K562 (cell line): ENCODE measurements at regions of chr3 and their contacts with region 1.

Region 1: GRCh38 chr3:176939022-176939817 is 258.1 kb downstream of the TBL1XR1 start:
- DNase-seq: peak; percentile 57 to 70 (median 60)
- ATAC-seq: peak; percentile 96
- H3K4me3 ChIP-seq: no peak overlapping the region
- H3K27ac ChIP-seq: no peak overlapping the region
- H3K4me1 ChIP-seq: no peaks in the 10 kb centered on the region
- H3K27me3 ChIP-seq: no peaks in the 10 kb centered on the region
- CTCF ChIP-seq: peak; percentile 63 to 77 (median 74)
- EP300 ChIP-seq: no peak
- POLR2A ChIP-seq: no peak
- RAD21 ChIP-seq: peak; percentile 78 to 89

Region 2: DNA sequence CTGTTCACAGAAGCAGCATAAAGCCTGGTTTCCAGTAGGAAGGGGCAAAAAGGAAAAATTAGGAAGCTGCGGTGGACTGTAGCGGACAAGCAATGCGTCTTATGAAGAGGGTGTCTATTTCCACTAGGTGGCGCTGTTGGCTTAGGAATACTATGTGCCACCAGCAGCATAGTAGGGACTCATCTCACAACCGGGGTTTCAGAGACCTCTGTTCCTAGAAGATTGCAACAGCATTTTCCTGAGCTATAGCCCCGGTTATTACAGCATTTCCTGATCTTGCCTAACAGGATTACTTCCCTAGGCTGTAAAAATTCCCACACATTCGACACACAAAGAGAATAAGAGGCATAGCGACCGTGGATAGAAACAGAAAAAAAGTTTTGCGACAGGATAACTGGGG is 424.9 kb before region 1 on chr3:
- CTCF ChIA-PET with region 1: no interaction called
- POLR2A ChIA-PET with region 1: no interaction called
- in situ Hi-C with region 1: no loop called
- intact Hi-C with region 1: loop called (anchors 1 kb)
- DNase-seq: peak; percentile 79 to 87 (median 80)
- ATAC-seq: peak; percentile 99
- H3K4me3 ChIP-seq: no peak overlapping the region
- H3K27ac ChIP-seq: no peak overlapping the region
- H3K4me1 ChIP-seq: no peaks in the 10 kb centered on the region
- H3K27me3 ChIP-seq: no peaks in the 10 kb centered on the region
- CTCF ChIP-seq: peak; percentile 72 to 85 (median 72)
- EP300 ChIP-seq: no peak
- POLR2A ChIP-seq: no peak
- RAD21 ChIP-seq: peak; percentile 94 to 95

Region 3: DNA sequence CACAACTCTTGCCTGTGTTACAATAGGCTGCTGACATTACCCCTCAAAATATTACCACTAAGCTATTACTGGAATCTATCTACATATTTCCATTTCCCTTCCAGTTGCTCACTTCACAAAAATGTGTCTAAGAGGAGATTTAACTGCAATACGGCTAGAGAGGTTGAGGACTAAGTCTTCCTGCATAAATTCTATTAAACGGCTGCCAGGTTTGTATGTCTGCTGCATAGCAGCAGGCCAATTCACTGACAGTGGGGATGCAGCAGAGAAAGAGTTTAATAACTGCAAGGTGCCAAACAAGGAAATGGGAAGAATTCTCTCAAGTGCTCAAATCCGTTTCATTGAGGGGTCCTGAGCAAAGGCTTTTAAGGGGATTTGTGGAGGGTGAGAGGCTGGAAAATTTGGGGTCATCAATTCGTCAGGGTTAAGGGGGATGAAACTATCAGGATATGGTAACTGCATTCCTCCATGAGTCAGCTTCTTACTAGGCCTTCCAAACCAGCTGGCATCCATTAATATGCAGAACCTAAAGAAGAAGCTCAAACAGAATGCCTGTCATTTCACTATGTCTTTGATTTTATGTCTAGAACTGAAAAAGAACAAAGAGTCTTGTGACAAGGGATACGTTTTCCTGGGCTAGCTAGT is 417.6 kb before region 1 on chr3:
- CTCF ChIA-PET with region 1: no interaction called
- POLR2A ChIA-PET with region 1: no interaction called
- in situ Hi-C with region 1: loop called (anchors 10 kb)
- intact Hi-C with region 1: no loop called
- DNase-seq: no peak
- ATAC-seq: no peak
- H3K4me3 ChIP-seq: no peak overlapping the region
- H3K27ac ChIP-seq: no peak overlapping the region
- H3K4me1 ChIP-seq: no peaks in the 10 kb centered on the region; a peak in 1 of 5 replicates
- H3K27me3 ChIP-seq: no peaks in the 10 kb centered on the region
- CTCF ChIP-seq: no peak
- EP300 ChIP-seq: no peak
- POLR2A ChIP-seq: no peak
- RAD21 ChIP-seq: no peak

Region 4: GRCh38 chr3:176663837-176664831 is 275.1 kb before region 1 on chr3:
- CTCF ChIA-PET with region 1: no interaction called
- POLR2A ChIA-PET with region 1: no interaction called
- in situ Hi-C with region 1: no loop called
- intact Hi-C with region 1: no loop called
- DNase-seq: peak in 2 of 4 experiments; percentile 18 to 67
- ATAC-seq: peak; percentile 77
- H3K4me3 ChIP-seq: no peak overlapping the region
- H3K27ac ChIP-seq: no peak overlapping the region
- H3K4me1 ChIP-seq: peaks cover 0 to 9% of the 10 kb centered on the region in 2 experiments; a peak in 2 of 5 replicates
- H3K27me3 ChIP-seq: no peaks in the 10 kb centered on the region
- CTCF ChIP-seq: peak; percentile 30 to 66 (median 58); a peak in 5 of 6 replicates
- EP300 ChIP-seq: no peak
- POLR2A ChIP-seq: no peak
- RAD21 ChIP-seq: peak; percentile 80 to 86

Region 5: GRCh38 chr3:176814285-176814684 is 124.9 kb before region 1 on chr3:
- CTCF ChIA-PET with region 1: no interaction called
- POLR2A ChIA-PET with region 1: no interaction called
- in situ Hi-C with region 1: no loop called
- intact Hi-C with region 1: loop called (anchors 5 kb)
- DNase-seq: peak; percentile 9 to 74 (median 34)
- ATAC-seq: peak; percentile 100
- H3K4me3 ChIP-seq: no peak overlapping the region
- H3K27ac ChIP-seq: no peak overlapping the region
- H3K4me1 ChIP-seq: no peaks in the 10 kb centered on the region
- H3K27me3 ChIP-seq: no peaks in the 10 kb centered on the region
- CTCF ChIP-seq: peak; percentile 68 to 76 (median 71)
- EP300 ChIP-seq: no peak
- POLR2A ChIP-seq: no peak
- RAD21 ChIP-seq: peak; percentile 40 to 61

Region 6: DNA sequence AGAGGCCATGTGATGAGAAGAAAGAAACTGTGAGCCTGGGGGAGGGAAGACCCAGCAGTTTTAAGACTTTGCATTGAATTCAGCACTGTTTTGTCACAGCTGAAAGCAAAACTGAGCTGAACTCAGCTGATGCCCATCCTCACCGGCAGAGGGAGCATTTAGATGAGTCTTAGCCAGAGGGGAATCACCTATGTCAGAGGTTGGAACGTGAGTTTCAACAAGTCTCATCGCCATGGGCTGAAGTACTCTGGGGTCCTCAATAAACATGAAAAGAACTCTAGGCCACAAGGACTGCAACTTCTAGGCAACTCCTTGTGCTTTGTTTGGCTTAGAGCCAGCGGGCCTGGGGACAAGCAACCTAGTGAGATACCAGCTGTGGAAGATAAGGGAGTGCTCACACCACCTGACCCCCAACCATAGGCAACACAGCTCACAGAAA is 66.4 kb before region 1 on chr3:
- CTCF ChIA-PET with region 1: no interaction called
- POLR2A ChIA-PET with region 1: no interaction called
- in situ Hi-C with region 1: no loop called
- intact Hi-C with region 1: loop called (anchors 2 kb)
- DNase-seq: peak; percentile 21 to 61 (median 30)
- ATAC-seq: peak; percentile 95
- H3K4me3 ChIP-seq: no peak overlapping the region
- H3K27ac ChIP-seq: no peak overlapping the region
- H3K4me1 ChIP-seq: peaks cover 3 to 5% of the 10 kb centered on the region in 2 experiments; a peak in 3 of 5 replicates
- H3K27me3 ChIP-seq: no peaks in the 10 kb centered on the region
- CTCF ChIP-seq: peak; percentile 65 to 72 (median 66)
- EP300 ChIP-seq: no peak
- POLR2A ChIP-seq: no peak
- RAD21 ChIP-seq: peak; percentile 29 to 75

Region 7: DNA sequence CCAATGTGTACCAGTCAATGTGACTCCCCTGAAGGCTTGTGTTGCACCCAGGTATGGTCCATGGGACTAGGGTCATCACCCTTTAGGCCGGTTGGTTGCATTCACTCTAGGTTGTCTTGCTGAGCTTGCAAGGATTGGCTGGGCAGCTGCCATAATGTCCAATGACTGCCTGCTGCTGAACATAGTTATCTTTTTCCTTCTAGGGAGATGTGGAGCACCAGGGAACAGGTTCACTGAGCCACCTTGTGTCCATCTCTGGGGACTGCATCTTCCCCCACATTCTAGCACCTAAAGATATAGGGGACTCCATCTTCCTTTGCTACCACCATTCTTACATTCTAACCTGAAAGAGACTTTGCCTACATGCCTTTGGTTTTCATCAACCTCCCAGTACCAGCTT is 838.5 kb after region 1 on chr3:
- CTCF ChIA-PET with region 1: no interaction called
- POLR2A ChIA-PET with region 1: no interaction called
- in situ Hi-C with region 1: loop called (anchors 10 kb)
- intact Hi-C with region 1: no loop called
- DNase-seq: peak; percentile 50 to 75 (median 56)
- ATAC-seq: peak; percentile 98
- H3K4me3 ChIP-seq: no peak overlapping the region
- H3K27ac ChIP-seq: no peak overlapping the region
- H3K4me1 ChIP-seq: no peaks in the 10 kb centered on the region; a peak in 1 of 5 replicates
- H3K27me3 ChIP-seq: no peaks in the 10 kb centered on the region
- CTCF ChIP-seq: peak; percentile 68 to 78 (median 76)
- EP300 ChIP-seq: no peak
- POLR2A ChIP-seq: no peak
- RAD21 ChIP-seq: peak; percentile 87 to 93

Region 8: DNA sequence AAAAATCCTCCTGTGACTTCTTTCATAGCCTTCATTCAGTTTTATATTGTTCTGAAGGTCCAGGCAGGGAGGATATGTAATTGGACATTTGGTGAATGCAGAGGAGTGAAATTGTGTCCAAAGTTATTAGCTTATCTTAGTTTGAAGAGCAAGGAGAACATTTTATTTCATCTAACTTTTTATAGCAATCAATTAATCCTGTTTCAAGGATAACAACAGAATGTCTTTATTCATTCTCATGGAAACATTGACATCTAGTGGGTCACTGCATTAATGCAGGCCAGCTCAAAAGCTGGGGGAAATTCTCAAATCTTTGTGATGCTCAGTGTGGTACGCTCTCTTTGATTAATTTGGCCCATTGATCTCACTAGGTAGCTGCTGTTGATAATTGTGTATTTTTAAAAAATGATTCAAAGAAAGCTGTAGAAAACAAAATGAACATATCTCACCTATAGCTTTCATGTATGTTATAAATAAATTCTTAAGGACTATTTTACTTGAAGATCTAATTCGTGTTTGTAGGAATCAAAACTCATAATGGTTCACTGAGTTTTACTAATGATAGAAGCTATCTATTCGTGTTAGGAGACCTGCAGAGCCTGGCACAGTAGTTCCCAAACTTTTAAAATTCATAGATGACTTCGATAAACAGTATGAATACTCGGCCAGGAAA is 1446.2 kb after region 1 on chr3:
- CTCF ChIA-PET with region 1: no interaction called
- POLR2A ChIA-PET with region 1: no interaction called
- in situ Hi-C with region 1: no loop called
- intact Hi-C with region 1: loop called (anchors 10 kb)
- DNase-seq: peak; percentile 16 to 48 (median 28)
- ATAC-seq: peak; percentile 66; the same call in 2 of the 3 replicates
- H3K4me3 ChIP-seq: no peak overlapping the region
- H3K27ac ChIP-seq: no peak overlapping the region
- H3K4me1 ChIP-seq: no peaks in the 10 kb centered on the region; a peak in 1 of 5 replicates
- H3K27me3 ChIP-seq: no peaks in the 10 kb centered on the region
- CTCF ChIP-seq: peak; percentile 29 to 77 (median 72); a peak in 5 of 6 replicates
- EP300 ChIP-seq: 0 out of 2 replicates have a peak, but pooled peaks have one; percentile 3
- POLR2A ChIP-seq: no peak
- RAD21 ChIP-seq: peak; percentile 91